Activated CD8-positive, alpha-beta memory T cell treated with anti-CD3 and anti-CD28 coated beads, Interleukin-2, amount 10 ng/mL, durations not matched to agents 7 days and 5 days (primary cell): ENCODE measurements at regions of chr1 and their contacts with region 1.

Region 1: GRCh38 chr1:161038523-161039153 is at the start of gene TSTD1:
- DNase-seq: peak; percentile 90
- ATAC-seq: peak; percentile 92
- H3K4me3 Mint-ChIP-seq: peak within 1 kb of the TSS; percentile 84
- H3K27ac Mint-ChIP-seq: peak within 1 kb of the TSS; percentile 90
- H3K4me1 Mint-ChIP-seq: peaks cover 47% of the 10 kb centered on the region
- H3K27me3 Mint-ChIP-seq: no peaks in the 10 kb centered on the region
- total RNA-seq, gene TSTD1: 62.8 TPM

Region 2: DNA sequence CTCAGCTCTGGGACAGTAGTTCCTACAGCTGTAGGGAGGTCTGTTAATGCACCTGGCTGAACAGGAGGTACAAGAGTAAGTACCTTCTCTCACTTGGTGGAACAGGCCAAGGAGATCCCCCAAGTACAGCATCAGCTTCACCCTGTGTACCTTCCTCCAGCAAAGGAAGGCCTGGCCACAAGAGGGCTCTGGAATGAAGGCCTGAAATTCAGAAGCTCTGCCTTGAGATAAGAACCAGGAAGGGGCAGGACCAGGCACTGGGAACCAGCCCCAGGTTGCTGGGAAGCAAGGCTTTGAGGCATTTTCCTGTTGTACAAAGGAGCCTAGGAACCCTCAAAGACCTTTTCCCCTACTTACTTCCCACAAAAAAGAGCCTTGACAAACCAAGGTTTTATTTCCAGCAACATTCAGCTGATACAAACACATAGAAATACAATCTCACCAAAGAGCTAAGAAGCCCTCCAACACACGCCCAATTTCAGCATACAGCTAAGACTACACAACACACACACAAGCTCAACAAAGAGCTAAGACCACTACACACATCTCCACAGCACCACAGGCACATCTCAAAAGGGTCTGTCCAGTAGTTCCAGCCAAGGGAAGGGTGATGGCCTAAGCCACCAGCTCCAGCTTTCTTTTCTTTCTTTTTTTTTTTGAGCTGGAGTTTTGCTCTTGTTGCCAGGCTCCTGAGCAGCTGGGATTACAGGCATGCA is 41.2 kb before region 1 on chr1:
- CTCF ChIA-PET with region 1: interaction called, 11 read pairs
- DNase-seq: peak; percentile 66
- ATAC-seq: peak; percentile 73
- H3K4me3 Mint-ChIP-seq: no peak overlapping the region
- H3K27ac Mint-ChIP-seq: peak overlapping the region; percentile 21
- H3K4me1 Mint-ChIP-seq: peaks cover 19% of the 10 kb centered on the region
- H3K27me3 Mint-ChIP-seq: peaks cover 3% of the 10 kb centered on the region

Region 3: GRCh38 chr1:161021165-161021960 is 17.3 kb before region 1 on chr1:
- CTCF ChIA-PET with region 1: interaction called, 17 read pairs
- DNase-seq: peak; percentile 90
- ATAC-seq: peak; percentile 96
- H3K4me3 Mint-ChIP-seq: peak overlapping the region; percentile 82
- H3K27ac Mint-ChIP-seq: peak overlapping the region; percentile 86
- H3K4me1 Mint-ChIP-seq: peaks cover 32% of the 10 kb centered on the region
- H3K27me3 Mint-ChIP-seq: no peaks in the 10 kb centered on the region